Activated CD4-positive, alpha-beta T cell treated with anti-CD3 and anti-CD28 coated beads for 36 hours (primary cell): ENCODE measurements at regions of chr4 and their contacts with region 1.

Region 1: GRCh38 chr4:183504064-183504929 is 561 bp upstream of the ING2 start:
- DNase-seq: peak; percentile 99
- ATAC-seq: peak; percentile 80
- H3K4me3 Mint-ChIP-seq: peak overlapping the region; percentile 85
- H3K27ac Mint-ChIP-seq: peak overlapping the region; percentile 95
- H3K4me1 Mint-ChIP-seq: peaks cover 33% of the 10 kb centered on the region
- H3K27me3 Mint-ChIP-seq: no peaks in the 10 kb centered on the region

Region 2: DNA sequence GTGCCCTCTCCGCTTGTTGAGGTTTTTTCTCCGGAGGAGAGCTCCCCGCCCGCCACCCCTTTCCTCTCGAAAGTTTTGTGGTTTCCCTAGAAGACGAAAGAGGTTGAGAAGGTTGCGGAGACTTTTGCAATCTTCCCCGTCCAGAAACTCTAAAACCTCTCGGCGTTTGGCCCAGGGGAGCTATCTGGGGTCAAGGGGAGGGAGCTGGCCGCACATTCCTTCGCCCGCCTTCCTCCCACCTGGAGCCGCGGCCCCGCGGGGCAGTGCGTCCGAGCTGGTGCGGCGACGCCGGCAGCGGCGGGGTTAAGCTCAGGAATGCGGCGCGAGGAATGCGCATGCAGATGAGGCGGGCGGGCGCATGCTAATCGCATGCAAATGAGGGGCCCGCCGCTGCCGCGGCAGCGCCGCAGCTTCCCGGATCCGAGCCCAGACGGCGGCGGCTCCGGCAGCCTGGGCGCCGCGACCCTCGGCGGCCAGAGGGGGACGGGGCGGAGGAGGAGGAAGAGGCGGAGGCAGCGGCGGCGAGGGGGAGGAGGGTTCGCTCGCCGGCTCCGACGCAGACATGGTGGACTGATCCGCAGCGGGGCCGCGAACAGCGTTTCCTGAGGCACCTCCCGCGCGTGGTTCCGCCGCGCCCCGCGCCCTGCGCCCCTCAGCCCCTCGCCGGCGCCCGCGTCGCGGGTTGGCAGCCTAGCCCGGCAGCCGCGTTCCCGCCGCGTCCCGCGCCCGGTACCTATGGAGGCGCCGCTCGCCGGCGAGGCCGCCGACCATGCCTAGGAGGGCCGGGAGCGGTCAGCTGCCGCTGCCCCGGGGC is 405.4 kb before region 1 on chr4 and contains the start of gene WWC2:
- CTCF ChIA-PET with region 1: no interaction called
- POLR2A ChIA-PET with region 1: no interaction called
- intact Hi-C with region 1: loop called in 1 of 2 experiments (anchors 1 kb)
- DNase-seq: peak; percentile 75
- ATAC-seq: peak; percentile 75
- H3K4me3 Mint-ChIP-seq: peak within 1 kb of the TSS; percentile 59
- H3K27ac Mint-ChIP-seq: no peak within 1 kb of the TSS
- H3K4me1 Mint-ChIP-seq: peaks cover 5% of the 10 kb centered on the region
- H3K27me3 Mint-ChIP-seq: peaks cover 33% of the 10 kb centered on the region
- total RNA-seq, gene WWC2: 3.6 to 4.3 TPM

Region 3: DNA sequence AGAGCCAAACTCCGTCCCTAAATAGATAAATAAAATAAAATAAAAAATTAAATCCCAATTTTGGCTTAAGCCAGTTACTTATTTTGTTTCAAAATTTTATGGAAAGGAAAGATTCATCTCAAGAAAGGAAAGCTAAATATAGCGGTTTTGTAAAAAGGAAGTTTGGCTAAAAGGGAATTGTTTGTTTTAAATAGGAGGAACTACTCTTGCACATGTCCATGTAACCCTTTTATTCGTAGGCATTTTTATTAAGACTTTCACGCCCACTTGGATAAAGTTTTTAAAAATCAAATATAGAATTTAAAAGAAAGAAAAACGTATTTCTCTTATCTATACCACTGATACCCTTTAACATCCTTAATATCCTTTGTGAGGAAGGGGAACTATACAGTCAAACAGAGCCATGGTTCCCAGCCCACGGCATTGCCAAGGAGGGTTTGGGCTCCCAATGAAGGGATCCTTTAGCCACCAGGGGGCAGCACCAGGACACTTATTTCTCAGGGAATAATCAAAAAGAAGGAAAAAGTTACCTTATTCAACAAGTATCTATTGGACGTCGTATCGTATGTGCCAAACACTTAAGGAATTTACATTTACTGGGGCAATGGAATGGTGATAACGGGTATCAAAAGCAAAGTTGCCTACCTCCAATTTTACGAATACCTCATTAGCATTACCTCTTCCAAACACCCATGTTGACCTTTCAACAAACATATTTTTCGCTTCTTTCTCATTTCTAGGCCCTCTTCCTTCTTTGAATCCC is 32.2 kb before region 1 on chr4:
- CTCF ChIA-PET with region 1: no interaction called
- POLR2A ChIA-PET with region 1: no interaction called
- intact Hi-C with region 1: loop called in 1 of 2 experiments (anchors 1 kb)
- DNase-seq: peak; percentile 91
- ATAC-seq: peak; percentile 84
- H3K4me3 Mint-ChIP-seq: no peak overlapping the region
- H3K27ac Mint-ChIP-seq: no peak overlapping the region
- H3K4me1 Mint-ChIP-seq: no peaks in the 10 kb centered on the region
- H3K27me3 Mint-ChIP-seq: no peaks in the 10 kb centered on the region

Region 4: DNA sequence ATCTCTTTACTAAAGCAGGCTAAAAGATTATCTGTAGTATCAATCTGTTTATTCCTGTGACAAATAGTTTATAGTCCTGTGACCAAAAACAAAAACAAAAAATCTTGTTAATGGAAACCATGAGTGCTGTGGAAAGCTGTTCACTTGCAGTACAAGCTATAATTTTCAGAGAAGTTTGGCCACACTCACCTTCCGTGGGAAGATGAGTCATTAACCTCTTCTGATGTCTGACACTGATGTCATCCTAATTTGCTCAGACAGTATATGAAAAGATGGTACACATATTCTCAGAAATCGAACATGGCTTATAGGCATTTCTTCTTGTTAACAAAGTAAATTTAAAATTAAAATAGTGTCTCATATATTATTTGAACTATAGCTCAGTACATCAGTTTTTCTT is 733.3 kb after region 1 on chr4:
- CTCF ChIA-PET with region 1: no interaction called
- POLR2A ChIA-PET with region 1: no interaction called
- intact Hi-C with region 1: loop called in 1 of 2 experiments (anchors 10 kb)
- DNase-seq: peak; percentile 73
- ATAC-seq: peak; percentile 97
- H3K4me3 Mint-ChIP-seq: peak overlapping the region; percentile 9
- H3K27ac Mint-ChIP-seq: peak overlapping the region; percentile 84
- H3K4me1 Mint-ChIP-seq: peaks cover 28% of the 10 kb centered on the region
- H3K27me3 Mint-ChIP-seq: no peaks in the 10 kb centered on the region

Region 5: DNA sequence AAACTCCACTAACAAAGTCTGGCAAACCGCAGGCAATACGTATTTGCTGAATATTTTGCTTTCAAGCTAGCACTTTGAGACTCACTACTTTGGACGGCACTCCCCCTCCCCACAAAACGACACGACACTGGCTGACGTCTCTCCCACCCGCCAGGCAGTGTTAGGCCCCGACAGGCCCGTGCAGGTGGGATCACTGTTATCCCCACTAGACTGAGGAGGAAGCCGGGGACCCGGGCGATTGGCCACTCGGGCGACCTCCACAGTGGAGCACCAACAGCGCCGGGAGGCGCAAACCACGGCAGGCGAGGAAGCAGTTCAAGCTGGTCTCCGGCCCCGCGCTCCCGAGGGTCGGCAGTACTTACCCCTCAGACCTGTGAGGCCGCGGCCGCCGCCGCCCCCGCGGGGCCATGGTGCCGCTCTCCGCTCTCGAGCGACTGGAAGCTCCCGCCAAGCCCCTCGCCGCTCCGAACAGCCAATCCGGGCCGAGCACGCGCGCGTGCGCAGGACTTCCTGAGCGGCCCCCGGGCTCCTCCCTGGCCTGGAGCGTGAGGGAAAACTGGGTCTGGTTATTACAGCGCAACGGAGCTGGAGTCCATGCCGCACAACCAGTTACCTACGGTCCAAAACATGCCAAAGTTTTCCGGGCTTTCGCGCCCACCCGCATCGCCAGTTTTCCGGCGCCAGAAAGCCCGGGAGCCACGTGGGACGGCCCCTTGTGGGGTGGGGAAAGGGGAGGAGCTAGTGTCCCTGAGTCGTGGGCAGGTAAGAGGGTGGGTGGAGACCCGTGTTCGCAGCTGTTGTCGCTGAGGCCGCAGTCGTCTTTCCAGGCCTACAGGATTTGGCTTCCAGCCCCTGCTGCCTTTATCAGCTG is 1229.6 kb after region 1 on chr4 and contains the start of gene CENPU:
- CTCF ChIA-PET with region 1: no interaction called
- POLR2A ChIA-PET with region 1: no interaction called
- intact Hi-C with region 1: loop called in 1 of 2 experiments (anchors 1 kb)
- DNase-seq: peak; percentile 98
- ATAC-seq: peak; percentile 95
- H3K4me3 Mint-ChIP-seq: peak within 1 kb of the TSS; percentile 98
- H3K27ac Mint-ChIP-seq: peak within 1 kb of the TSS; percentile 94
- H3K4me1 Mint-ChIP-seq: peaks cover 24% of the 10 kb centered on the region
- H3K27me3 Mint-ChIP-seq: no peaks in the 10 kb centered on the region
- total RNA-seq, gene CENPU: 87.7 to 88.4 TPM